Dorsolateral prefrontal cortex (tissue), 120 donors: ENCODE measurements at regions of chr2 and their contacts with region 1.

Region 1: GRCh38 chr2:159030674-159031380 is 62.4 kb downstream of the TANC1 start:
- DNase-seq: no peak
- H3K4me3 ChIP-seq: no peak overlapping the region
- H3K27ac ChIP-seq: peak overlapping the region in 52 of 59 donors; percentile 1 to 83 (median 49)
- H3K27me3 ChIP-seq: no peaks in the 10 kb centered on the region
- CTCF ChIP-seq: no peak

Region 2: DNA sequence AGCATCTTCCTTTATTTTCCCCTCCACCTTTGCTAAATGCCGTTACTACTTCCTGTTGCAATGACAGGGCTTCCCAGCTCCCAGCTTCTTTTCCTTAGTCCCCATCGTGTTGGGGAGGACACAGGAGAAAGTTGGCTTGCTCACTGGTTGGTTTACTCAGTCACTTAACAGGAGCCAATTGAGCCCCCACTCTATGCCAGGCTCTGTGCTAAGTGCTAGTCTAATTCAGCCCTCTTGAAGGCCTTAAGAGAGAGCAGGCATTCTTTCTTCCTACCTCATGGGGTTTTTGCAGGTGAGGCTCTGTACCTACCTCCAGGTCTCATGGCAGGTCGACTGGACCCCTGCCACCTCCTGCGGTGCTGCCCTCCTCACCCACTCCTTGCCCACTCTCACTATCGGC is 42.3 kb before region 1 on chr2:
- intact Hi-C with region 1: no loop called
- DNase-seq: no peak
- H3K4me3 ChIP-seq: no peak overlapping the region
- H3K27ac ChIP-seq: no peak overlapping the region
- H3K27me3 ChIP-seq: no peaks in the 10 kb centered on the region
- CTCF ChIP-seq: no peak

Region 3: GRCh38 chr2:158998551-158999248 is 32.1 kb before region 1 on chr2:
- intact Hi-C with region 1: loop called in 1 of 2 experiments (anchors 2 kb)
- DNase-seq: peak in 3 of 10 donors; percentile 18 to 65 (median 34)
- H3K4me3 ChIP-seq: peak overlapping the region in 36 of 59 donors; percentile 1 to 46 (median 21)
- H3K27ac ChIP-seq: peak overlapping the region; percentile 2 to 95 (median 88)
- H3K27me3 ChIP-seq: peaks cover 0 to 3% (median 0%) of the 10 kb centered on the region in 45 donors
- CTCF ChIP-seq: no peak

Region 4: GRCh38 chr2:159044804-159045286 is 14.0 kb after region 1 on chr2:
- intact Hi-C with region 1: no loop called
- DNase-seq: no peak
- H3K4me3 ChIP-seq: no peak overlapping the region
- H3K27ac ChIP-seq: no peak overlapping the region
- H3K27me3 ChIP-seq: no peaks in the 10 kb centered on the region
- CTCF ChIP-seq: no peak

Region 5: DNA sequence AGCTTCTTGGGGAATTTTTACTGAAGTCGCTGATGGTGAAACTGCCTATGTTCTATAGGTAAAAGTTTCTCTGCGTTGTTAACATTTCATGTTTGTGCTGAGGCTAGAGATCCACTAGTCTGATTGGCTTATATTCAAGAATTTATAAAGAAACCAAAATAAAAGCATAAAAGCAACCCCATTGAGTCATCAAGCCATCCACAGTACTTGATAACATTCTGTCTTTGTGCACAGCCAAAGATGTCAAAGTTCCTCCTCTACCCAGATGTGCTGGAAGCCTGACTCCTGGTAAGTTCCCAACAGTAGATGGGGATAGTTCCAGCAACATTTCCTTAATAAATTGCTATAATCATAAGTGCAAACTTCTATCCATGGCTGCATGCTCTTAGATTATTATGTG is 45.4 kb after region 1 on chr2:
- intact Hi-C with region 1: no loop called
- DNase-seq: no peak
- H3K4me3 ChIP-seq: no peak overlapping the region
- H3K27ac ChIP-seq: no peak overlapping the region
- H3K27me3 ChIP-seq: no peaks in the 10 kb centered on the region
- CTCF ChIP-seq: no peak

Region 6: DNA sequence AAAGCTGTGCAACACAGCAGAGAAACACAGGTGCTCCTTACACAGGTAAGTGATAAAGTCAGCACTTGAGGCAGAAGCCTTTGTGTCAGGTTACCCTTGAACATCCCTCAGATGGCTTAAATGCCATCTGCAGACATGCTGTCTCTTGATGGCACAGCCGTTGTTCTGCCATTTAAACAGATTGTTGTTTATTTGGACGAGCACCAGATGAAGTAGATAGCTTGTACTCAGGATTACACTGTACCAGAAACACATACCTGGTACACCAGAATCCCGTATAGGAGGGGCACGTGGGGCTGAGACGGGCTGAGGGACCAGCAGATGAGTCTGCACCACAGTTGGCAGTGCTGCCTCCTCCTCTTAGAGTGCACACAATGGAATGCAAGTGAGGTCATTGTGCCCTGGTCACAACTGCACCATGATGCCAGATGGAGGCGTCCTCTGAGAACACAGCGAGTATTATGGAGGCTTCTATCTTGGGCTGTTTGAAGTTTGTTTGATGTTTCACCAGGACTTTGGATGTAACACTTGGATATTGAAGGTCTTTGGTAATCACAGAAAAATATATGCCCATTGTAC is 80.6 kb after region 1 on chr2:
- intact Hi-C with region 1: loop called in 1 of 2 experiments (anchors 5 kb)
- DNase-seq: peak in 8 of 10 donors; percentile 30 to 74 (median 62)
- H3K4me3 ChIP-seq: peak overlapping the region in 8 of 59 donors; percentile 2 to 27 (median 17)
- H3K27ac ChIP-seq: peak overlapping the region in 18 of 59 donors; percentile 7 to 64 (median 36)
- H3K27me3 ChIP-seq: no peaks in the 10 kb centered on the region
- CTCF ChIP-seq: peak in 11 of 56 donors; percentile 8 to 37 (median 20)

Region 7: DNA sequence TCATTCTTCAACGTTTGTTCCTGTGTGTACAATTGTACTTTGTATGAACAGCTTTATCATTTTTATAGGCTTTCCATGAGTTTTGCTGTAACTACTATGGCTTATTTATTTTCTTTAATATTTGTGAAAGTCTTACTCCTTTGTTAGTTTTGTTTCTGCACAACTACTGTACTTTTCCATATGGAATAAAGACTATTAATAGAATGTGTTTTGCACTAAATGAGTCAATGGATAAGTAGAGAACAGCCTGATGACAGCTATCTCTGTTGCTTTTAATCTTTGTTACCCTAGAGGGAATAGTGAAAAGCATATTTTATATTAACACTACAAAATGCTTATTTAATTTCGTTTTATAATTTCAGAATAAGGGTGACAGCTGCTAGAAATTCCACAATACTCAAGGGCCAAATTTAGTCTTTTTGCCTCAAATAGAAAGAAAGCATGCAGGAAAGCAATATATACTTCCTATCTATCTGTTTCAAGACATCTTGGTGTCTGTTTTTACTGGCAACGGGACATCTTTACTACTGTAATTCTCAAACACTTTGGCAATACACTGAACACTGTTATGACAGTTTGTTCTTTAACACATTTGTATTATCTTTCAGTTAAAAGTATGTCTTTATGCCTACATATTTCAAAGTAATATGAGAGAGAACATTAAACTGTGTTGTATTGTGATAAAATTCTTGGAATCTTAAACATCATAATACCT is 201.8 kb after region 1 on chr2:
- intact Hi-C with region 1: no loop called
- DNase-seq: no peak
- H3K4me3 ChIP-seq: no peak overlapping the region
- H3K27ac ChIP-seq: peak overlapping the region in 9 of 59 donors; percentile 1 to 47 (median 16)
- H3K27me3 ChIP-seq: no peaks in the 10 kb centered on the region
- CTCF ChIP-seq: no peak